Activated CD4-positive, alpha-beta memory T cell treated with anti-CD3 and anti-CD28 coated beads, Interleukin-2, amount 10 ng/mL, durations not matched to agents 7 days and 5 days (primary cell): ENCODE measurements at regions of chrX and their contacts with region 1.

Region 1: DNA sequence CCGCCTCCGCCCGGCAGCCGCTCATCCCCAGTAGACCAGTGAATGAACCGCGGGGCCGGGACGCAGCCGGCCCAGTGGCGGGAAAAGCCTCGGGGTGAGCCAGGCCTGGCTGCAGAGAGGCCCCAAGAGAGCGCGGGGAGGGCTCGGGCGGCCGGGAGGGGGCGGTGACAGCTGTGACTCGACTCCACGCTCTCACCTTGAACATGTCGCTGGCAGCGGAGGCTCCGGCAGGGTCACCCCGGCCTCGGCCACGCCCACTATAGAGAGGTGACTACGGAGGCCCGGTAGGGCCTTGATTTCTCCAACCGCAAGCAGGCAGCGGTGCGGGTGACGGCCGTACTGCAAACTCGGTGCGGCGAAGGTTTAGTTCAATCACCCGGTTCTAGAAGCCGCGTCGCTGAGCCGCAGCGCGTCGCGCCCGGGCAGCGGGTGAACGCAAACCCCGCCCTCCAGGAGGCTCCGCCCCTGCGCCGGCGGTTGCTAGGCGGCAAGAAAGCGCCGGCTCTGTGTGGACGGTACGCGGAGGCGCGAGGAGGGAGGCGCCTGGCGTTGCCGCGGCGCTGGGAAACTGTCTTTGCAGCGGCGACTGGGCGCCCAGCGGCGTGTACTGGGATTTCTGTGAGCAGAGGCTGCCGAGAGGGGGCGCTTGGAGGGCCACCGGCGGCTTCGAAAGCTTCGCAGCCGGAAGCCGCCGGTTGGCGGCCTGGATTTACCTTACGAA is at the starts of genes APOO and CXorf58:
- DNase-seq: peak; percentile 93
- H3K4me3 Mint-ChIP-seq: peak within 1 kb of the TSS; percentile 77
- H3K27ac Mint-ChIP-seq: peak within 1 kb of the TSS; percentile 89
- H3K4me1 Mint-ChIP-seq: peaks cover 23% of the 10 kb centered on the region
- H3K27me3 Mint-ChIP-seq: no peaks in the 10 kb centered on the region
- total RNA-seq, gene APOO: 25.1 to 26.3 TPM
- total RNA-seq, gene CXorf58: not detected

Region 2: GRCh38 chrX:23726191-23726590 is 181.5 kb before region 1 on chrX:
- CTCF ChIA-PET with region 1: no interaction called
- POLR2A ChIA-PET with region 1: no interaction called
- DNase-seq: no peak
- H3K4me3 Mint-ChIP-seq: no peak overlapping the region
- H3K27ac Mint-ChIP-seq: no peak overlapping the region
- H3K4me1 Mint-ChIP-seq: peaks cover 2% of the 10 kb centered on the region
- H3K27me3 Mint-ChIP-seq: no peaks in the 10 kb centered on the region

Region 3: DNA sequence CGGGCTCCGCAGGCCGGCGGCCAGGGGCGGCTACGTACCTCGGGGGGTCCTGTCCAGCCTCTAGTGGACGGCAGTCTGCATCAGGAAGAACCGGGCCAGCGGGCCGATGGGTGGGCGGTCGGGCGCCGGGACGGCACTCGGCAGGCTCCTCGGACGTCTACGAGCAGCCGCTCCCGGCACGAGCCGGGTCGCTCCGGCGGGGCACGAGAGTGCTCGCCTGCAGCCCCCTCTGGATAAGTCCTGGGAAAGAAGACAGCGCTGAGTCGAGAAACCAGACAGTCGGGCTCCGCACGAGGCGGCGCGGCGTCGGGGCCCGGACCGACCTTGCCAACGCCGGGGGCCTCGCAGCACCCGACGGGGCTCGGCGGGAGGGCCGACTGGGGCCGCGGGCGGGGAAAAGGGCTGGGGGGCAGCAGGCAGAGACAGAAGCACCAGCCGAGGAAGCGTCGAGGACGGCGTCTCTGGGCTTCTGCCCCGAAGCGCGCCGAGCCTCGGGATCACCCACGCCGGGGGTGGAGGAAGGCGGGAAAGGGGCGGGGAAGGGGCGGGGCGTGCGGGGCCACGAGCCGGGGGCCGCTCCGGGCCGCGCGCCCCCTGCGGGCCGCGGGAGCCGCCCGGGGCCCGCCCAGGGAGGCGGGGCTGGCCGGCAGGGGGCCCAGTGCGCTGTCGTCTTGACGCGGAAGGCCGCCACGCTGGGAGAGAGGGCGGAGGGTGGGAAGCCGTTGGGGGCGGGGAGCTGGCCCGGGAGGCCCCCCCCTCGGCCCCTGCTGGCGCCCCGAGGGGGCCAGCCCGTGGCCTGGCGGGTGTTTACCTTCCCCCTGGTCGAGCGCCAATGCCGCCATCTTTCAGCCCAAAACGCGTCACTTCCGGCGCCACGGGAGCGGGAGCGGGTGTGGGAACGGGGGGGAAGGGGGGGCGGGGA is 117.4 kb after region 1 on chrX:
- CTCF ChIA-PET with region 1: interaction called, 18 read pairs
- POLR2A ChIA-PET with region 1: interaction called, 33 read pairs
- DNase-seq: peak; percentile 86
- H3K4me3 Mint-ChIP-seq: peak overlapping the region; percentile 88
- H3K27ac Mint-ChIP-seq: peak overlapping the region; percentile 87
- H3K4me1 Mint-ChIP-seq: peaks cover 27% of the 10 kb centered on the region
- H3K27me3 Mint-ChIP-seq: no peaks in the 10 kb centered on the region

Region 4: DNA sequence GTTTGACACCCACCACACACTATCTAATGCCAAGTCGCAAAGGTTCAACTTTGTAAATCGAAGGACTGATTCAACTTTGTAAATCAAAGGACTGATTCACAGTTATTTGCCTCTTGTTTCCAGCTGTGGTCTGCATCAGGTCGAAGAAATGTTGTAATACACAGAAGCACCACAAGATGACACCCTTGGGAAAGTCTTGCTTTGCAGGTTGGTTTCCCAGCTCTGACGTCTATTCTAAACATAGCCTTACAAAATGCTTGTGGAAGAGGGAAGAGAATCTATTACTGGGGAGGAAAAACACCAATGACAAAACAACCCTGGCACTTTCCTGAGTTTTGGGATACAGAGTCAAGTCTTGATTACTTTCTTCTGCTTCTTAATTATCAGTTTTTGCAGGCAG is 488.1 kb after region 1 on chrX:
- CTCF ChIA-PET with region 1: no interaction called
- POLR2A ChIA-PET with region 1: no interaction called
- DNase-seq: peak; percentile 26
- H3K4me3 Mint-ChIP-seq: no peak overlapping the region
- H3K27ac Mint-ChIP-seq: no peak overlapping the region
- H3K4me1 Mint-ChIP-seq: no peaks in the 10 kb centered on the region
- H3K27me3 Mint-ChIP-seq: peaks cover 10% of the 10 kb centered on the region